Psoas muscle (tissue), 8 donors: ENCODE measurements at regions of chr22 and their contacts with region 1.

Region 1: GRCh38 chr22:50620593-50621355 is 7.2 kb downstream of the ARSA start:
- DNase-seq: peak; percentile 78 to 88
- ATAC-seq: peak; percentile 71 to 87 (median 76)
- H3K4me3 ChIP-seq: peak overlapping the region; percentile 56
- H3K27ac ChIP-seq: peak overlapping the region; percentile 48
- H3K4me1 ChIP-seq: peaks cover 27% of the 10 kb centered on the region
- H3K27me3 ChIP-seq: no peaks in the 10 kb centered on the region
- CTCF ChIP-seq: no peak

Region 2: DNA sequence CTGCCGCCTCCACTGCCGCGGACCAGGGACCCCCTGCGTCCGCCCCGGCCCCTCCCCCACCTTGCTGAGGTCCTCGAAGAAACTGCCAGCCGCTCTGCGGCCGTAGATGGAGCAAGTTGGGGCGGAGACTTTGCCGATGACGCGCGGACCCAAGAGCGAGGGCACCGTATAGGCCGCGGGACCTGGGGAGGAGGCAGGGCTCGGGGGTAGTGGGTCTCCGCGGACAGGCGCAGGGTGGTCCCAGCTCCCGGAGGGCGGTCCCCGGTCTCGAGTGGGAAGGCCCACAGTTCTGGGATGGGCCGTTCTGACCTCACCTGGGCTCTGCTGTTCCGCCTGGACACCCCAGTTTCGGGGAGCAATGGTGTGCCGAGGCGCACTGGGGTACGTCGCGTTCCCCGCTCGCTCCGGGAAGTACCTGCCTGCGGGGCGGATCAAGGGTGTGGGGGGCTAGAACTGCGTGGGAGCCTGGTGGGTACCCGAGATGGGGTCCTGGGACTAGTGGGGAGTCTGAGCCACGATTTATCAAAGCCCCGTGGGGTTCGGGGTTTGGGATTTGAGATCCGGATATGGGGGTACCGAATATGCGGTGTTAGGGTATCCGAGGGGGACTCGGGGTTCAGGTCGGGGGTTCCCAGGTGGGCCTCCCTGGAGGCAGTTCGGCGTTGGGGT is 89.8 kb before region 1 on chr22:
- intact Hi-C with region 1: loop called in 1 of 2 experiments (anchors 5 kb)
- DNase-seq: peak; percentile 85 to 93
- ATAC-seq: peak; percentile 36 to 62 (median 40)
- H3K4me3 ChIP-seq: peak overlapping the region; percentile 69
- H3K27ac ChIP-seq: peak overlapping the region; percentile 79
- H3K4me1 ChIP-seq: peaks cover 22% of the 10 kb centered on the region
- H3K27me3 ChIP-seq: peaks cover 0 to 69% (median 25%) of the 10 kb centered on the region in 3 donors
- CTCF ChIP-seq: no peak

Region 3: DNA sequence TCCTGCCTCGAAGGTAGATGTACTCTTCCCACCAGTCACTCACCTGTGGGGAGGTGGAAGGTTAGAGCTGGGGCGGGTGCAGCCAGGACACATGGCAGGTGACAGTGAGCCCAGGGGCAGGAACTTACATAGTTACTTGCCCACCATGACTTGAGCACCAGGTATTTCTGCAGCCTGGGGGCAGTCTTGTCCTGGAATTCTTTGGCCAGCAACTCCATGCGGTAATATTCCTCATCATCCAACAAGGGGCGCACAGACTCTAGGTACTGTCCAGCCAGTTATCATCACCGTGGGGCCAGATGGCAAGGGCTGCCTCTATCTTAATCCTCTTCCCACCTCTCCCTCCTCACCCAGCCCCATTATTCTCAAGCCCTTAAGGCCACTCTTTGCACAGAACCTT is 44.7 kb before region 1 on chr22:
- intact Hi-C with region 1: loop called (anchors 5 kb)
- DNase-seq: no peak
- ATAC-seq: peak in 2 of 4 donors; percentile 9 to 23
- H3K4me3 ChIP-seq: no peak overlapping the region
- H3K27ac ChIP-seq: no peak overlapping the region
- H3K4me1 ChIP-seq: peaks cover 25% of the 10 kb centered on the region
- H3K27me3 ChIP-seq: no peaks in the 10 kb centered on the region
- CTCF ChIP-seq: peak; percentile 20

Region 4: DNA sequence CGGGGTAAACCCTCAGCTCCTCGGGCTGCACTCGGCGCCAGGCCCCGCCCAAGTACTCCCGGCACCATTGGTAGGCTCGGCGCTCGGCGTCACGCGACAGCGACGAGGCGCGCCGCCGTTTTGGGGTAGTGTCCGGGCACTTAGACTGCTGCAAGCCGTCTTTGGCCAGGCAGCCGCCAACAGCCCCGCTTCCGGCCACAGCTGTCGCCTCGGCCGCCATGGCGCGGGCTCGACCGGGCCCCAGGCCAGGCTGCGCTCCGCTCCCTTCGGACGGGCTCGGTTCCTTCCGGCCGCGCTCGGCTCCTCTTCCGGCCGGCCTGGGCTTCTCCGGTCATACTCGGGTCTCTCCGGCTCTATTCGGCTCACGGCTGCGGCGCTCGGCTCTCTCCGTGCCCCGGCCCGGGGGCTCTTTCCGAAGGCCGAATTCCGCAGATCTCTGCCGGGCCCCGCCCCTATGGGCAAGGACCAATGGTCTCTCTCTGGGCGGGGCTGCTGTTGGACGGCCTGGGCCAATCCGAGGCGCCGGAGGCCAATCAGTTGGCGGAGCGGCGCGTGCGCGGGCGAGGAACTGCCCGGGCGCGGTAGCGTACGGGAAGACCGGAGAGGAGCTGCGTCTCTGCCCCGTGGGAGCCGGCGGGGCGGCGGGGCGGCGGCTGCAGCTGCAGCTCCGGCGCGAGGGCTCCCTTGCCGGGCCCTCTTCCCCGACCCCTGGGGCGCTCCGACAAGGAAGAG is 38.0 kb before region 1 on chr22 and contains the start of gene CHKB:
- intact Hi-C with region 1: loop called (anchors 5 kb)
- DNase-seq: peak; percentile 99 to 100
- ATAC-seq: peak; percentile 90 to 95 (median 94)
- H3K4me3 ChIP-seq: peak within 1 kb of the TSS; percentile 94
- H3K27ac ChIP-seq: peak within 1 kb of the TSS; percentile 100
- H3K4me1 ChIP-seq: peaks cover 31% of the 10 kb centered on the region
- H3K27me3 ChIP-seq: no peaks in the 10 kb centered on the region
- CTCF ChIP-seq: no peak
- total RNA-seq, gene CHKB: 11.5 to 25.2 (median 16.3) TPM

Region 5: DNA sequence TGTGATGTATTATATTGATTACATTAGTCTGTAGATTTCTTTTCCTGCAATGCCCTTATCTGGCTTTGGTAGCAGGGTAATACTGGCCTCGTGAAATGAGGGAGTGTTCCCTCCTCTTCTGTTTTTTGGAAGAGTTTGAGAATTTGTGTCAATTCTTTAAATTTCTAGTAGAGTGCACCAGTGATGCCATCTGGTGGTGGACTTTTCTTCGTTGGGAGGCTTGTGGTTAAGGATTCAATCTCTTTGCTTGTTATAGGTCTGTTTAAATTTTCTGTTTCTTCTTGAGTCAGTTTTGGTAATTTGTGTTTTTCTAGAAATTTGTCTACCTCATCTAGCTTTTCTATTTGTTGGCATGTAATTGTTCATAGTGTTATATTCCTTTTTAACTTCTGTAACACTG is 70.7 kb after region 1 on chr22:
- intact Hi-C with region 1: no loop called
- DNase-seq: no peak
- ATAC-seq: no peak
- H3K4me3 ChIP-seq: no peak overlapping the region
- H3K27ac ChIP-seq: no peak overlapping the region
- H3K4me1 ChIP-seq: no peaks in the 10 kb centered on the region
- H3K27me3 ChIP-seq: peaks cover 0 to 2% (median 0%) of the 10 kb centered on the region in 3 donors
- CTCF ChIP-seq: peak; percentile 25